ENCODE measurements at regions of chr1 and their contacts with region 1.

Region 1: DNA sequence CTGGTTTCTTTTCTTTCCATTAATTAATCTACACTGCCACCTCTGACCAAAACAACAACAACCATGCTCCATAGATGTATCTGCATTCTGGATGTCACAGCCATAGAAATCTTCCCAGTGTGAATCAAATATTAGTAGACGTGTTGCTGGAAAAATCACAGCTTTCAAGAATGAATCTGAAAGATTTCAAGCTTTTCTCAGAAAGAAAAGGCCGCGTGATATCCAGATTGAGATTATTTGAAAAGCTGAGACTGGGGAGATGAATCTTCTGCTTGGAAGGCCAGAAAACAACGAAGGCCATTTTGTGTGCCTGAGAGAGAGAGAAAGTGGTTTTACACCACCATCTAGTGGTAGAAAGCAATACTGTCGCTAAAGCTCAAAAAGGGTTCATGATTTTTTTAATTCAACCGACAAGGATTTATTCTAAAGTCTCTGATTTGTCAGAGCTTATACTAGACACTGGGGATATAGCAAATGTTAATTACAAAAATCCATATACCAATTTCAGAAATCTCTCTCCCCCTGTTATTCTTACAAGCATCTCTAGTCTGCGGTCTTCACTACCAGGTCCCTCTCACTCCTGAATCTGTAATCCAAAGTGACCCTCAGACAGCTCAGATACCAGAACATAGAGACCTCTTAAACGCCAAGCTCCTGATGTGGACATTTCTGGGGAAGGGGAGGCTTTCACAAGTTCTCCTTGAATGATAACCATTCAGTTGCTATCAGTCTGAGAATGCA is 87.5 kb upstream of the SGIP1 start:
- DNase-seq: peak in 8 of 14 experiments; percentile 8 to 87 (median 34)
- ATAC-seq: peak; percentile 77
- H3K4me3 ChIP-seq: no peak overlapping the region
- H3K4me3 Mint-ChIP-seq: peak overlapping the region; percentile 39
- H3K27ac ChIP-seq: peak overlapping the region; percentile 63 to 83
- H3K27ac Mint-ChIP-seq: peak overlapping the region; percentile 86
- H3K4me1 ChIP-seq: peaks cover 16% of the 10 kb centered on the region
- H3K4me1 Mint-ChIP-seq: peaks cover 24% of the 10 kb centered on the region
- H3K27me3 ChIP-seq: no peaks in the 10 kb centered on the region
- H3K27me3 Mint-ChIP-seq: no peaks in the 10 kb centered on the region
- CTCF ChIP-seq: peak; percentile 90

Region 2: DNA sequence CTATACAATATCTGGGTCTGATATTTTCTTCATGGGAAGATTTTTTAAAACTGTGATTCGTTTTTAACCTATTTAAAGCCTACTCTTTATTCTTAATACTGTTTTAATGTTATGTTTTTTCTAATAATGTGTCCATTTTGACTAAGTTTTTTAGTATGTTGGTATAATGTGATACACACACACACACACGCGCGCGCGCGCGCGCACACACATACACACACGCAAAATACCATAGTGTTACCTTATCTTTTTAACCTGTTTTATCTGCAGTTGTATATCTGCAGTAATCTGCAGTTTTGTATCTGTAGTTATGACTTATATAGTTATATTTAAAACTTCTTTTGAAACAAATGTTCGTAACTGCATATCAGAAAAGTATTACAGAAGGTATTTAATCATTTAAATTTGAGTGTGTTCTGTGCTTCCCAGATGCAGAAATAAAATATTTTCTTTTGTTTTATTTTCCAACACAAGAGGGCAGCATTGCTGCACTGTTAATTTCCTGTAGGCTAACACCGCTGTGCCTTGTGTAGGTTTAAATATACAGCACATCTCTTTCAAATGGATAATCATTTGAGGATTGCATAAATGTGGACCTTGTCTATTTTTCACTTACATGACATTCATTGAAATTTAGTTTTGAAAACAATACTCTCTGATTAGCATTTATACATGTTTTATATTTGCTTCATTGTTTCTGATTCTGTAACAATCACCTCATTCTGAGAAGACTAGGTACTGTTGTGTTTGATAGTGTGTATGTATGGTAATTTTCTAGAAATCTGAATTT is 487.7 kb before region 1 on chr1:
- CTCF ChIA-PET with region 1: interaction called, 32 read pairs
- POLR2A ChIA-PET with region 1: interaction called, 7 read pairs
- intact Hi-C with region 1: loop called (anchors 1 kb)
- DNase-seq: peak in 10 of 14 experiments; percentile 1 to 73 (median 8)
- ATAC-seq: peak; percentile 68
- H3K4me3 ChIP-seq: no peak overlapping the region
- H3K4me3 Mint-ChIP-seq: no peak overlapping the region
- H3K27ac ChIP-seq: no peak overlapping the region
- H3K27ac Mint-ChIP-seq: no peak overlapping the region
- H3K4me1 ChIP-seq: no peaks in the 10 kb centered on the region
- H3K4me1 Mint-ChIP-seq: no peaks in the 10 kb centered on the region
- H3K27me3 ChIP-seq: peaks cover 0 to 5% of the 10 kb centered on the region in 2 experiments
- H3K27me3 Mint-ChIP-seq: no peaks in the 10 kb centered on the region
- CTCF ChIP-seq: peak; percentile 97

Region 3: GRCh38 chr1:66253330-66253921 is 193.0 kb before region 1 on chr1:
- CTCF ChIA-PET with region 1: interaction called, 172 read pairs
- POLR2A ChIA-PET with region 1: interaction called, 26 read pairs
- intact Hi-C with region 1: loop called (anchors 1 kb)
- DNase-seq: peak in 4 of 14 experiments; percentile 30 to 75 (median 69)
- ATAC-seq: peak; percentile 65
- H3K4me3 ChIP-seq: no peak overlapping the region
- H3K4me3 Mint-ChIP-seq: no peak overlapping the region
- H3K27ac ChIP-seq: no peak overlapping the region
- H3K27ac Mint-ChIP-seq: no peak overlapping the region
- H3K4me1 ChIP-seq: peaks cover 3% of the 10 kb centered on the region
- H3K4me1 Mint-ChIP-seq: peaks cover 15% of the 10 kb centered on the region
- H3K27me3 ChIP-seq: no peaks in the 10 kb centered on the region
- H3K27me3 Mint-ChIP-seq: no peaks in the 10 kb centered on the region
- CTCF ChIP-seq: peak; percentile 94

Region 4: GRCh38 chr1:66282343-66282852 is 164.0 kb before region 1 on chr1:
- CTCF ChIA-PET with region 1: interaction called, 24 read pairs
- POLR2A ChIA-PET with region 1: no interaction called
- intact Hi-C with region 1: loop called in 1 of 2 experiments (anchors 1 kb)
- DNase-seq: peak in 12 of 14 experiments; percentile 17 to 92 (median 49)
- ATAC-seq: peak; percentile 95
- H3K4me3 ChIP-seq: no peak overlapping the region
- H3K4me3 Mint-ChIP-seq: peak overlapping the region; percentile 45
- H3K27ac ChIP-seq: peak overlapping the region; percentile 5 to 67
- H3K27ac Mint-ChIP-seq: peak overlapping the region; percentile 88
- H3K4me1 ChIP-seq: peaks cover 54% of the 10 kb centered on the region
- H3K4me1 Mint-ChIP-seq: peaks cover 91% of the 10 kb centered on the region
- H3K27me3 ChIP-seq: no peaks in the 10 kb centered on the region
- H3K27me3 Mint-ChIP-seq: no peaks in the 10 kb centered on the region
- CTCF ChIP-seq: no peak

Region 5: GRCh38 chr1:66331657-66332547 is 114.5 kb before region 1 on chr1:
- CTCF ChIA-PET with region 1: interaction called, 18 read pairs
- POLR2A ChIA-PET with region 1: interaction called, 18 read pairs
- intact Hi-C with region 1: loop called in 1 of 2 experiments (anchors 2 kb)
- DNase-seq: peak in 13 of 14 experiments; percentile 23 to 80 (median 34)
- ATAC-seq: peak; percentile 22
- H3K4me3 ChIP-seq: peak overlapping the region; percentile 85
- H3K4me3 Mint-ChIP-seq: peak overlapping the region; percentile 99
- H3K27ac ChIP-seq: peak overlapping the region; percentile 48 to 82
- H3K27ac Mint-ChIP-seq: peak overlapping the region; percentile 99
- H3K4me1 ChIP-seq: peaks cover 30% of the 10 kb centered on the region
- H3K4me1 Mint-ChIP-seq: peaks cover 77% of the 10 kb centered on the region
- H3K27me3 ChIP-seq: no peaks in the 10 kb centered on the region
- H3K27me3 Mint-ChIP-seq: no peaks in the 10 kb centered on the region
- CTCF ChIP-seq: no peak

Region 6: DNA sequence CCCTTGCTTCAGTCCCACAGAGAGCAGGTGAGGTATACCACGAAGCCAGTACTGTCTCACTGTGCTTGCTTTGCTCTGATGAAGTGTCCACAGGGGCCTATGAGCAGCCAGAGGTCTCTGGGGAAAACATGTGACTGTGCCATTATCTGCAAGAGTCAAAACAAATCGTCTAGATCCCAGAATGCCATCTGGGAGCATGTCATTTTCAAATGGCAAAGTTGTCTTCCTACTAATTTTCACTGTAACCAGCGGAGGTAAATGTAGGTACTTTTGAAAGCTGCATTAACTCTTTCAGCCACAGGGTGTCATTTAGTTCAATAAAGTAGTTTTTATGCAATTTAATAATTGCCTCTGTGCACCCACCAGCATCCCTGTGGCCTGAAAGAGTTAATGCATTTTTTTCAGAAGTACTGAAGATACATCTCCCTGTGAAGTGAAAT is 86.1 kb before region 1 on chr1:
- CTCF ChIA-PET with region 1: interaction called, 10 read pairs
- POLR2A ChIA-PET with region 1: no interaction called
- intact Hi-C with region 1: no loop called
- DNase-seq: no peak
- ATAC-seq: no peak
- H3K4me3 ChIP-seq: no peak overlapping the region
- H3K4me3 Mint-ChIP-seq: no peak overlapping the region
- H3K27ac ChIP-seq: peak overlapping the region in 1 of 2 donors; percentile 16
- H3K27ac Mint-ChIP-seq: peak overlapping the region; percentile 19
- H3K4me1 ChIP-seq: peaks cover 39% of the 10 kb centered on the region
- H3K4me1 Mint-ChIP-seq: peaks cover 78% of the 10 kb centered on the region
- H3K27me3 ChIP-seq: no peaks in the 10 kb centered on the region
- H3K27me3 Mint-ChIP-seq: no peaks in the 10 kb centered on the region
- CTCF ChIP-seq: no peak

Region 7: GRCh38 chr1:66396212-66396890 is 50.1 kb before region 1 on chr1:
- CTCF ChIA-PET with region 1: no interaction called
- POLR2A ChIA-PET with region 1: no interaction called
- intact Hi-C with region 1: no loop called
- DNase-seq: peak in 2 of 14 experiments; percentile 42 to 55
- ATAC-seq: no peak
- H3K4me3 ChIP-seq: no peak overlapping the region
- H3K4me3 Mint-ChIP-seq: no peak overlapping the region
- H3K27ac ChIP-seq: no peak overlapping the region
- H3K27ac Mint-ChIP-seq: no peak overlapping the region
- H3K4me1 ChIP-seq: no peaks in the 10 kb centered on the region
- H3K4me1 Mint-ChIP-seq: peaks cover 6% of the 10 kb centered on the region
- H3K27me3 ChIP-seq: no peaks in the 10 kb centered on the region
- H3K27me3 Mint-ChIP-seq: no peaks in the 10 kb centered on the region
- CTCF ChIP-seq: no peak

Region 8: GRCh38 chr1:66725885-66726665 is 279.6 kb after region 1 on chr1:
- CTCF ChIA-PET with region 1: no interaction called
- POLR2A ChIA-PET with region 1: no interaction called
- intact Hi-C with region 1: loop called in 1 of 2 experiments (anchors 5 kb)
- DNase-seq: peak in 13 of 14 experiments; percentile 3 to 83 (median 33)
- ATAC-seq: peak; percentile 68
- H3K4me3 ChIP-seq: no peak overlapping the region
- H3K4me3 Mint-ChIP-seq: no peak overlapping the region
- H3K27ac ChIP-seq: no peak overlapping the region
- H3K27ac Mint-ChIP-seq: no peak overlapping the region
- H3K4me1 ChIP-seq: peaks cover 2% of the 10 kb centered on the region
- H3K4me1 Mint-ChIP-seq: peaks cover 19% of the 10 kb centered on the region
- H3K27me3 ChIP-seq: peaks cover 0 to 3% of the 10 kb centered on the region in 2 experiments
- H3K27me3 Mint-ChIP-seq: peaks cover 15% of the 10 kb centered on the region
- CTCF ChIP-seq: peak; percentile 97

Measured in CD4-positive, alpha-beta T cell (primary cell).